ENCODE measurements at regions of chr3 and their contacts with region 1.

Region 1: GRCh38 chr3:48130321-48130904 is 57.8 kb downstream of the CDC25A start:
- DNase-seq: peak; percentile 96
- ATAC-seq: peak; percentile 86
- H3K4me3 ChIP-seq: no peak overlapping the region
- H3K27ac ChIP-seq: peak overlapping the region; percentile 74
- H3K4me1 ChIP-seq: peaks cover 13% of the 10 kb centered on the region
- H3K27me3 ChIP-seq: no peaks in the 10 kb centered on the region
- CTCF ChIP-seq: no peak
- POLR2A ChIP-seq: no peak
- RAD21 ChIP-seq: no peak

Region 2: DNA sequence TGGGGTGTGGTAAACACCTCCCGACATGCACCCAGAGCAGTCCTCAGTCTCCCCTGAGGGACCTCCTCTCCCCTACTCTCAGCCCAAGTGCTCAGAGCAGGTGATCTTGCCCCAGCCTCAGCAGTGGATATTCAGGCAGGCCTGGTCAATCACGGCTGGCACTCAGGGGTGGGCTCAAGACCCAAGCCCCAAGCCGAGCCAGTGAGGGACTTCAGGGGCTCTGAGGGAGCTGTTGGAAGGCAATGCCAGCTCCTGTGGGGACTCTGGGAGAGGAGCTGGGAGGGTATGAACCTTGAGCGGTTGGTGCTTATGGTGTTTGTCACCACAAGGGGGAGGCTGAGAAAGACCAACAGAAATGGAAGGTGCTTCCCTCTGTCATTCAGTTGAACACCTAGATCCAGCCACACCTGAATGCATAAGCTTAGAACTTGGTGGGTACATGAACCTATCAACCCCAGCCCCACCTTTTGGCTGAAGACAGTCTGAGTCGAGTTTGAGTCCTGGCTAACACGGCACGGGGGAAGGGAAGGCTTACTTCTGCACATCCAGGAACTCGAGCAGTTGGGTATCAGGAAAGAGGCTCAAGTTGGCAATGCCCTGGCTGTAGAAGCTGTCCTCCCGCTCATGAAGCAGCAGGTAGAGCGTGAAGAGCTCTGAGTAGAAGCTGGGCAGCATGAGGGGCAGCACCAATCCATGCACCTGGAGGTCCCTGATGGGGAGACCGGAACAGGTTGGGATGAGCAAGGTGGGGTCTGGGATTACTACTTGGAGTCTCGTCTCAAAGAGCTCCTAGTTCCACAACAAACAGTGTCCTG is 1456.2 kb before region 1 on chr3:
- CTCF ChIA-PET with region 1: no interaction called
- POLR2A ChIA-PET with region 1: no interaction called
- dilution Hi-C with region 1: no loop called
- in situ Hi-C with region 1: no loop called
- intact Hi-C with region 1: no loop called
- DNase-seq: no peak
- ATAC-seq: no peak
- H3K4me3 ChIP-seq: no peak overlapping the region
- H3K27ac ChIP-seq: no peak overlapping the region
- H3K4me1 ChIP-seq: peaks cover 2% of the 10 kb centered on the region; the same call in 1 of the 2 replicates
- H3K27me3 ChIP-seq: no peaks in the 10 kb centered on the region
- CTCF ChIP-seq: peak; percentile 13; the same call in 1 of the 2 replicates
- POLR2A ChIP-seq: no peak
- RAD21 ChIP-seq: no peak

Region 3: DNA sequence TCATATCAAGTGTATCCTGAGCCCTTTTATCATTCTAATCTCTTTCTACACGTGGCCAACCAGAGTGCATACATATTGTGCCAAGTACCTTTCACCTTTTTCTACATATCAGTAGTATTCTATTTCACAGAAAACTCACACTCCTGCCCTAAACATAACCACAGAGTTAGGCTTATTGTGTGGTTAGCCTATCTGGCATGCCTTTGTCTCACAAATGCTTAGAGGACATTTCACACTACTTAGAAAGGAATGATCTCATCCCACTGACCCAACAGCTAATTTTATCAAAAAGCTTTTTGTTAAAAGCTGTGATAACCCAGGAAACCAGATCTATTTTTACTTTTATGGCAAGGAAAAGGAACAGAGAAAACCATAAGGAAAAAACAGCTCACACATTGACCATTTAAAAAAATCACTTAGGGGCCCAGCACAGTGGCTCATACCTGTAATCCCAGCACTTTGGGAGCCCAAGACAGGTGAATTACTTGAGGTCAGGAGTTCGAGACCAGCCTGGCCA is 96.4 kb before region 1 on chr3:
- CTCF ChIA-PET with region 1: interaction called, 11 read pairs
- POLR2A ChIA-PET with region 1: no interaction called
- dilution Hi-C with region 1: no loop called
- in situ Hi-C with region 1: no loop called
- intact Hi-C with region 1: no loop called
- DNase-seq: peak; percentile 86
- ATAC-seq: peak; percentile 52; the same call in 1 of the 2 replicates
- H3K4me3 ChIP-seq: no peak overlapping the region
- H3K27ac ChIP-seq: peak overlapping the region; percentile 29; the same call in 1 of the 2 replicates
- H3K4me1 ChIP-seq: peaks cover 29% of the 10 kb centered on the region
- H3K27me3 ChIP-seq: no peaks in the 10 kb centered on the region
- CTCF ChIP-seq: no peak
- POLR2A ChIP-seq: no peak
- RAD21 ChIP-seq: no peak